ENCODE measurements at regions of chr17 and their contacts with region 1.

Region 1: GRCh38 chr17:83037084-83037873 is 42.1 kb upstream of the METRNL start:
- DNase-seq: peak; percentile 38
- ATAC-seq: no peak

Region 2: DNA sequence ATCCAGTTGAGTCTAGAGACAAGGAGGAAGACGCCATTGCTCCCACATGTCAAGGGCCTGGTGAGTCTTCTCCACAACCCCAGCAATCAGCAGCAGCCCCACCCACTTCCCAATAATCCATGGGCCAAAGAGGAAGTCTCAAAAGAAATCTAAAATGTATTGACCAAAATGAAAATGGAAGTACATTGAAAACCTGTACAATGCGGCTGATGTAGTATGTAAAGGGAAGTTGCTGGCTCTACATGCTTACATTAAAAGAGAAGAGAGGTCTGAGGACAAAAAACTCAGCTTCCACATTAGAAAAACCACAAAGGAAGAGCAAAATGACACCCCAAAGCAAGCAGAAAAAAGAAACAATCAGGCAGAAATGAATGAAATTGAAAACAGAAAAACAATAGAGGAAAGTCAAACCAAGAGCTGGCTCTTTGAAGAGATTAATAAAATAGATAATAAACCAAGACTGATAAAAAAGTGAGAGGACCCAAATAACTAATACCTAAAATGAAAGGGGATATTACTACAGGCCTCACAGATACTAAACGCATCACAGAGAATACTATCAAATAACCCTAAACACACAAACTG is 58.4 kb before region 1 on chr17:
- intact Hi-C with region 1: loop called (anchors 10 kb)
- DNase-seq: no peak
- ATAC-seq: peak; percentile 53

Region 3: GRCh38 chr17:83067221-83068048 is 30.2 kb after region 1 on chr17:
- intact Hi-C with region 1: no loop called
- DNase-seq: peak; percentile 53
- ATAC-seq: no peak

Measured in sciatic nerve (tissue), 2 donors.